GM13977 (cell line): ENCODE measurements at regions of chr12 and their contacts with region 1.

Region 1: DNA sequence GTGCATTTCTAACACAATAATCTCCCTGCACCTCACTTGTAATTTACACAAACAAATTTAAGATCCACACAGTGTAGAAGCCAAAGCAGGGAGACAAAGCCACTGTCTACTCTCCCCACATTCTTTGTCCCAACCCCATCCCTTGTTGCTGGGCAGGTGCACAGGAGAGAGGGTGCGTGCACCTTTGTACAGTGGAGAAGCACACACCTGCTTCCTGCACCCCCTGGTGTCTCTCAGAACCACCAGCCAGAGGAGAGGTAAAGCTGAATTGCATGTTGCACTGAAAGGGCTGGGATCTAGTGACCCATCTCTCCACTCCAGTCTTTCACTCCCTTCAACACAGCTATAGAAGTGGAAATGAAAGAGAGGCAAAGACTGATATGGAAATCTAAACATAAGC is 51.4 kb upstream of the IFNG-AS1 start:
- DNase-seq: no peak
- CTCF ChIP-seq: no peak

Region 2: GRCh38 chr12:67649570-67650387 is 288.1 kb before region 1 on chr12:
- in situ Hi-C with region 1: loop called (anchors 10 kb)
- DNase-seq: peak; percentile 69
- CTCF ChIP-seq: no peak